ENCODE measurements at regions of chr2 and their contacts with region 1.

Region 1: GRCh38 chr2:52144585-52144984 is 1112.7 kb upstream of the NRXN1 start:
- DNase-seq: no peak
- ATAC-seq: no peak
- H3K4me3 ChIP-seq: no peak overlapping the region
- H3K27ac ChIP-seq: no peak overlapping the region
- H3K4me1 ChIP-seq: peaks cover 4% of the 10 kb centered on the region; the same call in 1 of the 2 replicates
- H3K27me3 ChIP-seq: no peaks in the 10 kb centered on the region
- CTCF ChIP-seq: peak; percentile 35; the same call in 1 of the 2 replicates

Region 2: DNA sequence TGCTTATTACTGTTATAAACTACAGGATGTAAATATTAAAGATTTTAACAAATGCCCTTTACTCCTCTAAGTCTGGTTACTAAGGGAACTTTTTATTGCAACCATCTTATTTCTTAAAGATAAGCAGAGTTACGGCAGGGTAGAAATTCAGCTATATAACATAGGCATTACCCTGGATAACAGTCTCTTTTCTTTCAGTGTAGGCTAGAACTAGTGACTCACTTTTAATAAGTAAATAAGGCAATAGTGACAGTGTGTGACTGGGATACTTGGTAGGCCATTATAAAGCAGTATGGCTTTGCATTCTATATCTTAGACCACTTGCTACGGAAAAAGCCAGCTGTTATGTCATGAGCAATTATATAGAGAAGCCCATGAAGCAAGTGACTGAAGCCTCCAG is 71.6 kb before region 1 on chr2:
- CTCF ChIA-PET with region 1: no interaction called
- POLR2A ChIA-PET with region 1: no interaction called
- intact Hi-C with region 1: loop called (anchors 2 kb)
- DNase-seq: peak; percentile 14
- ATAC-seq: peak; percentile 97
- H3K4me3 ChIP-seq: no peak overlapping the region
- H3K27ac ChIP-seq: no peak overlapping the region
- H3K4me1 ChIP-seq: no peaks in the 10 kb centered on the region
- H3K27me3 ChIP-seq: no peaks in the 10 kb centered on the region
- CTCF ChIP-seq: no peak